ENCODE measurements at regions of chr1 and their contacts with region 1.

Region 1: DNA sequence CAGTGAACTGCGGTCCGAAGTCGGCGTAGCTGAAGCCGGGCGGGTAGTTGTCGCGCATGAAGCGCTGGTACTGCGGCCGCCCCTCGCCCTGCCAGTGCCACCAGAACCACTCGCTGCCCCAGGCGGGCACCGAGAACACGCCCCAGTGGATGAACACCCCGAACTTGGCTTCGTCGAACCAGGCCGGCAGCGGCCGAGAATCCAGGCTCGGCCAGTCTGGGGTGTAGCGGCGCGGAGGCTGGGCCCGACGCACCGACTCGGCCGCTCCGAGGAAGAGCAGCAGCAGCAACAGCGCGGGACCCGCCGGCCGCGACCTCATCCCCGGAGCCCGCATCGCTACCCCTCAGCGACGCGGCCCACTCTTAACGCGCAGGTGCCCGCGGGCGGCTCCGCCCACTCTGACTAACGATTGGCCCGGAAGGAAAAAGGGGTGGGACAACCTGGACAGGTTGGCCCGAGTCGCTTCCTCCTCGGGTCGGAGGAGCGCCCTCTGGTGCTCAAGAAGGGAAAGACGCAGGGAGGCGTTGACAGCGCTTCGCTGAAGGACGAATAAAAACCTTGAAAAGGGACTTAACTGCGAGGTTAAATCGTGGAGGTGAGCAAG is at the start of gene FUCA1:
- DNase-seq: peak; percentile 88 to 91 (median 91)
- H3K4me3 ChIP-seq: peak within 1 kb of the TSS; percentile 54 to 82 (median 70)
- H3K4me3 Mint-ChIP-seq: peak within 1 kb of the TSS; percentile 84 to 93
- H3K27ac ChIP-seq: peak within 1 kb of the TSS; percentile 69 to 84
- H3K27ac Mint-ChIP-seq: peak within 1 kb of the TSS; percentile 83 to 91 (median 88)
- H3K4me1 ChIP-seq: peaks cover 51 to 56% of the 10 kb centered on the region in 2 donors
- H3K4me1 Mint-ChIP-seq: peaks cover 56% of the 10 kb centered on the region
- H3K27me3 ChIP-seq: no peaks in the 10 kb centered on the region
- H3K27me3 Mint-ChIP-seq: peaks cover 0 to 13% (median 2%) of the 10 kb centered on the region in 3 donors
- CTCF ChIP-seq: peak; percentile 94
- polyA plus RNA-seq, gene FUCA1: 24.2 to 97.7 (median 96.6) TPM

Region 2: GRCh38 chr1:23784846-23785245 is 83.2 kb before region 1 on chr1:
- intact Hi-C with region 1: loop called in 1 of 2 experiments (anchors 5 kb)
- DNase-seq: no peak
- H3K4me3 ChIP-seq: no peak overlapping the region
- H3K4me3 Mint-ChIP-seq: no peak overlapping the region
- H3K27ac ChIP-seq: no peak overlapping the region
- H3K27ac Mint-ChIP-seq: peak overlapping the region in 2 of 7 donors; percentile 19 to 26
- H3K4me1 ChIP-seq: peaks cover 2 to 6% of the 10 kb centered on the region in 2 donors
- H3K4me1 Mint-ChIP-seq: peaks cover 5% of the 10 kb centered on the region
- H3K27me3 ChIP-seq: no peaks in the 10 kb centered on the region
- H3K27me3 Mint-ChIP-seq: no peaks in the 10 kb centered on the region
- CTCF ChIP-seq: no peak

Region 3: DNA sequence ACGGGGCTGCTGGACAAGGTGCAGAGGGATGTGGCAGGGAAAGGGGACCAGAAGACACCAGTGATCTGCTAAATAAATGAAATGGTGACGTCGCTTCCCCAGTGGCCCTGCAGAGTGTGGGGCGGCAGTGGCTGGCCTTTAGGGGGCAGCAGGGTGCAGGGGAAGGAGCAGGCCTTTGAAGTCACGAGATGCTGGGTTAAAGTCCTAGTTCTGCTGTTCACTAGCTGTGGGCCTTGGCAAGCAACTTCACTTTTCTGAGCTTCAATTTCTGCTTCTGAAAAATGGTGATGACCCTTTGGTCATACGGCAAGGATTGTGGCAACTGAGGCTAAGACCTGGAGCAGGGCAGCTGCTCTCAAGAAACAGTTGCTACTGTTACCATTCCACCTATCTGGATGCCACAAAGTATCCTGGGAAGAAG is 58.3 kb before region 1 on chr1:
- intact Hi-C with region 1: loop called (anchors 5 kb)
- DNase-seq: peak; percentile 86 to 95 (median 91)
- H3K4me3 ChIP-seq: no peak overlapping the region
- H3K4me3 Mint-ChIP-seq: no peak overlapping the region
- H3K27ac ChIP-seq: peak overlapping the region; percentile 53 to 83
- H3K27ac Mint-ChIP-seq: peak overlapping the region; percentile 84 to 96 (median 92)
- H3K4me1 ChIP-seq: peaks cover 53 to 57% of the 10 kb centered on the region in 2 donors
- H3K4me1 Mint-ChIP-seq: peaks cover 57% of the 10 kb centered on the region
- H3K27me3 ChIP-seq: no peaks in the 10 kb centered on the region
- H3K27me3 Mint-ChIP-seq: peaks cover 0 to 3% (median 0%) of the 10 kb centered on the region in 3 donors
- CTCF ChIP-seq: peak; percentile 78

Region 4: DNA sequence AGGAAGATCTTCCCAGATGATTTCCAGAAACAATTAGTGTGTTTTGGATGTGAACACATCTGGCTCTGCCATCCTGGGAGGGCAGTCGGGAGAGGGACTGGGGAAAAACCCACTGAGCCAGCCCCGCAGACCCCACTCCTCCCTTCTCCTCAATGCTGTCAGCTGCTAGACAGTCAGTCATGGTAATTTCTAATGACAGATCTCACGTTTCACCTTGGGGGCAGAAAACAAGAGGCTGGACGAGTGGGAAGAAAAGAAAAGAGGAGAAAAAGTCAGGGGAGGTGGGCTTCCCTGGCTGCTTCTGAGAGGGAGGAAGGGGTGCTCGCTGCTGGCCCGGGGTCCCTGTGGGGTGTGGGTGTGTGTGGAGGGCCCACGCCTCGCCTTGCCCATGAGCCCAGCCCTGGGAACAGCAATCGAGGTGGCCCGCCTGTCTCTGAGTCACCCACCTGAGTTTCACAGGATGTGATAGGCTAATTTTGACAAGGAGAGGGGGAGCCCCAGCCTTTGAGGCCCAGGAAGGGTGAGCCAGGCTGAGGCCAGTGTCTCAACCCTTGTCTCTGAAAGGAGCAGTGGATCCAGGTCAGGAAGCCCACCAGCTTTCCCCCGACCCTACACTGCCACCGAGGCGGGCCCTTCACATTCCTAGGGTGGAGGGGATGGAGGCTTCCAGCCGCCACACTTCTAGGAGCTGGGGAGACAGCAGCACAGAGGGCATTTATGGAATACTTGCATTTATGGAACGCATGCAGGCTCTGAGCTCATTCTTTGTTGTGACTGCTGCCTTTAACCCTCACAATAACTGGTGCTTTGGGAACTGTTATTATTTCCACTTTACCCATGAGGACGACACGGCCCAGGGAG is 368.1 kb after region 1 on chr1:
- intact Hi-C with region 1: no loop called
- DNase-seq: no peak
- H3K4me3 ChIP-seq: no peak overlapping the region
- H3K4me3 Mint-ChIP-seq: no peak overlapping the region
- H3K27ac ChIP-seq: no peak overlapping the region
- H3K27ac Mint-ChIP-seq: no peak overlapping the region
- H3K4me1 ChIP-seq: no peaks in the 10 kb centered on the region
- H3K4me1 Mint-ChIP-seq: no peaks in the 10 kb centered on the region
- H3K27me3 ChIP-seq: no peaks in the 10 kb centered on the region
- H3K27me3 Mint-ChIP-seq: peaks cover 5 to 16% (median 13%) of the 10 kb centered on the region in 3 donors
- CTCF ChIP-seq: no peak

Measured in CD14-positive monocyte (primary cell).